ENCODE measurements at regions of chr13 and their contacts with region 1.

Region 1: DNA sequence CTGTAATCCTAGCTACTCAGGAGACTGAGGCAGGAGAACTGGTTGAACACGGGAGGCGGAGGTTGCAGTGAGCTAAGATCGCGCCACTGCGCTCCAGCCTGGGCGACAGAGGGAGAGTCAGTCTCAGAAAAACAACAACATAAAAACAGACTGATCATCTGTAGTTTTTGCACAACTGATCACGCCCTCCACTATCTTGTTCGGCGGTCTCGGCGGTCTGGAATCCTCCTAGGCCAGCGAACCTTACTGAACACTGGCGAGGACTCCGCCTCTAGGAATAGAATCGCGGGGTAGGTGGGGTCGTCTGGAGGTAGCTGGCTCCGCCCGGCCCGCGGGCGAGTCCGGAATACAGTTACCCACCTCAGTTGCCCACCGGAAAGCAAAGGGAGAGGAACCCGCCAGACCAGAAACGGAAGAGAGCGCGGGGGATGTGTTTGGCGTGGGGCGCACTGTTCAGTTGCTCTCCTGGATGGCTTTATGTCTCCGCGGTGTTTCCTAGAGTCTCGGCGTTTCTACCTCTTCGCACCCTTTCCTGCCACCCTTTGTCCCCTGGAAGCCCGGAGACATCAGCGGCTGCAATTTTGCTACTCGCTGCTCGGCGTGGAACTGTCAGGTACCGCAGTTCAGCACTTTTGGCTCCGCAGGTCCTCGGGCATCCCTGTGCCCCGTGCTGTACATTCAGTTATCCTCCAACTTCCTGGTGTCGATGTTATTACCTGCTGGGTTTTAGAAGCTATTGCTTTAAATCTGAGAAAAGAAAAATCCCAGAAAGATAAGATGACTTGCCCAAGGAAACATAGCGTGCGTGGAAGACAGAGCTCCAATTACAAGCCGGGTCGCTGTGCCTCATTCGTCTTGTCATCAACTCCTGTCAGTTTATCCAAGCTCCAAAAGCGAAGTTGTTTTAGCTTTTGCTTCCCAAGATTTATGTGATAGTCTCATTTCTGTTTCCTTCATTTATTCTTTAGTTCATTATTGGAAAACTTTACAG is 24.9 kb upstream of the HNRNPA1L2 start:
- DNase-seq: peak; percentile 80 to 85 (median 84)
- ATAC-seq: peak; percentile 97 to 99 (median 99)
- H3K4me3 ChIP-seq: peak overlapping the region; percentile 44 to 96 (median 72)
- H3K27ac ChIP-seq: peak overlapping the region; percentile 58 to 88 (median 80)
- H3K4me1 ChIP-seq: peaks cover 0 to 22% (median 7%) of the 10 kb centered on the region in 12 donors
- H3K27me3 ChIP-seq: no peaks in the 10 kb centered on the region
- CTCF ChIP-seq: no peak
- POLR2A ChIP-seq: peak in 1 of 2 donors; percentile 55

Region 2: GRCh38 chr13:52652196-52652979 is 35.0 kb after region 1 on chr13 and contains the start of gene SUGT1:
- intact Hi-C with region 1: loop called in 7 of 10 experiments (anchors 1 to 5 kb)
- DNase-seq: peak; percentile 98 to 99 (median 98)
- ATAC-seq: peak; percentile 99 to 100 (median 99)
- H3K4me3 ChIP-seq: peak within 1 kb of the TSS; percentile 59 to 91 (median 80)
- H3K27ac ChIP-seq: peak within 1 kb of the TSS; percentile 95 to 100 (median 99)
- H3K4me1 ChIP-seq: peaks cover 0 to 47% (median 38%) of the 10 kb centered on the region in 12 donors
- H3K27me3 ChIP-seq: no peaks in the 10 kb centered on the region
- CTCF ChIP-seq: peak; percentile 25 to 87 (median 61)
- POLR2A ChIP-seq: peak in 1 of 2 donors; percentile 61
- total RNA-seq, gene SUGT1: 32.7 to 59.2 (median 47.4) TPM

Region 3: GRCh38 chr13:52968074-52968700 is 350.8 kb after region 1 on chr13:
- intact Hi-C with region 1: loop called in 2 of 10 experiments (anchors 5 to 10 kb)
- DNase-seq: peak; percentile 61 to 76 (median 73)
- ATAC-seq: peak; percentile 82 to 91 (median 84)
- H3K4me3 ChIP-seq: no peak overlapping the region
- H3K27ac ChIP-seq: no peak overlapping the region
- H3K4me1 ChIP-seq: peaks cover 0 to 4% (median 0%) of the 10 kb centered on the region in 12 donors
- H3K27me3 ChIP-seq: peaks cover 0 to 19% (median 0%) of the 10 kb centered on the region in 9 donors
- CTCF ChIP-seq: peak; percentile 66 to 94 (median 84)
- POLR2A ChIP-seq: no peak